AG04450 (cell line): ENCODE measurements at regions of chr16 and their contacts with region 1.

Region 1: DNA sequence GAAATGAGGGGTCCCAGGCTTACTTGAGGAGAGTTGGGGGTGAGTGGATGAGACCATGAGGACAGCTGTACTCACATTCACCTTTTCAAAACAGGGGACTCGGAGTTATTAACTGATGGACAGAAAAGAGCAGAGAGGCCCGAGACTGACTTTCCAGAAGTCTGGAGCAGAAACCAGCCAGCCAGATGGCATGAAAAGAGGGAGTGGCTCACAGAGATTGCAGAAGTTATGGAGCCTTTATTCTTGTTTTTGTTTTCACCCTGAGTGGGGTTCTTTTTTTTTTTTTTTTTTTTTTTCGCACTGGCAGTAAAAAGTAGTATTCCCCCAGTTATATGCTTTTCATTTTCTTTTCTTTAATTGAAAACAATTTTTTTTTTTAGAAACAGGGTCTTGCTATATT is 18.9 kb downstream of the TVP23A start:
- DNase-seq: no peak
- H3K4me3 ChIP-seq: no peak overlapping the region
- H3K27ac ChIP-seq: no peak overlapping the region
- H3K27me3 ChIP-seq: no peaks in the 10 kb centered on the region
- CTCF ChIP-seq: no peak

Region 2: DNA sequence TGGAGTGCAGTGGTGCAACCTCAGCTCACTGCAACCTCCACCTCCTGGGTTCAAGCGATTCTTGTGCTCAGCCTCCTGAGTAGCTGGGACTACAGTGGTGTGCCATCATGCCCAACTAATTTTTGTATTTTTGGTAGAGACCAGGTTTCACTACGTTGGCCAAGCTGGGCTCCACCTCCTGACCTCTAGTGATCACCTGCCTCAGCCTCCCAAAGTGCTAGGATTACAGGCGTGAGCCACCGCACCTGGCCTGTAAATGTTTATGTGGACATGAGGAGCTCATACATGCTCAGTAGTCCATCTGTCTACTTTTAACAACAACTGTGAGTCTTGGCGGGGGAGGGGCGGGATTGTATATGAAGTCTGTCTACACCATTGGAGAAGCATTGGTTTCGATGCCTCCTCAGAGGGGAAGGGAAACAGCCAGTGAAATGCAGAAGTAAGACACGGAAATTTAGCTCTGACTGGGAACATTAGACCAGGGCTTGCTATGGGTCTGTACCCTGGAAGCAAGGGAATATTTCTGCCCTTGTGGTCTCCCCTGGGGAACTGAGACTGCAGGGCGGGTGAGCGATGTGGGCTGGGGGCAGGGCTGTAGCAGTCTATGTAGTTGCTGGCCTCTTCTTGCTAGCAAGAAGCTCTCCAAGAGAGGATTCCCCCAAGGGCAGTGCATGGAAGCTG is 46.8 kb before region 1 on chr16:
- CTCF ChIA-PET with region 1: no interaction called
- POLR2A ChIA-PET with region 1: interaction called, 11 read pairs
- DNase-seq: no peak
- H3K4me3 ChIP-seq: no peak overlapping the region
- H3K27ac ChIP-seq: no peak overlapping the region
- H3K27me3 ChIP-seq: no peaks in the 10 kb centered on the region
- CTCF ChIP-seq: no peak

Region 3: GRCh38 chr16:10776280-10776679 is 23.5 kb before region 1 on chr16:
- CTCF ChIA-PET with region 1: no interaction called
- POLR2A ChIA-PET with region 1: no interaction called
- DNase-seq: no peak
- H3K4me3 ChIP-seq: no peak overlapping the region
- H3K27ac ChIP-seq: no peak overlapping the region
- H3K27me3 ChIP-seq: no peaks in the 10 kb centered on the region
- CTCF ChIP-seq: no peak